ENCODE measurements at regions of chr10 and their contacts with region 1.

Region 1: GRCh38 chr10:110918643-110919363 is at the start of gene BBIP1:
- DNase-seq: no peak
- H3K4me3 Mint-ChIP-seq: peak within 1 kb of the TSS; percentile 94
- H3K27ac Mint-ChIP-seq: peak within 1 kb of the TSS; percentile 93
- H3K4me1 Mint-ChIP-seq: peaks cover 39% of the 10 kb centered on the region
- H3K27me3 Mint-ChIP-seq: no peaks in the 10 kb centered on the region
- total RNA-seq, gene BBIP1: 31.5 and 32.7 TPM in 2 replicates

Region 2: DNA sequence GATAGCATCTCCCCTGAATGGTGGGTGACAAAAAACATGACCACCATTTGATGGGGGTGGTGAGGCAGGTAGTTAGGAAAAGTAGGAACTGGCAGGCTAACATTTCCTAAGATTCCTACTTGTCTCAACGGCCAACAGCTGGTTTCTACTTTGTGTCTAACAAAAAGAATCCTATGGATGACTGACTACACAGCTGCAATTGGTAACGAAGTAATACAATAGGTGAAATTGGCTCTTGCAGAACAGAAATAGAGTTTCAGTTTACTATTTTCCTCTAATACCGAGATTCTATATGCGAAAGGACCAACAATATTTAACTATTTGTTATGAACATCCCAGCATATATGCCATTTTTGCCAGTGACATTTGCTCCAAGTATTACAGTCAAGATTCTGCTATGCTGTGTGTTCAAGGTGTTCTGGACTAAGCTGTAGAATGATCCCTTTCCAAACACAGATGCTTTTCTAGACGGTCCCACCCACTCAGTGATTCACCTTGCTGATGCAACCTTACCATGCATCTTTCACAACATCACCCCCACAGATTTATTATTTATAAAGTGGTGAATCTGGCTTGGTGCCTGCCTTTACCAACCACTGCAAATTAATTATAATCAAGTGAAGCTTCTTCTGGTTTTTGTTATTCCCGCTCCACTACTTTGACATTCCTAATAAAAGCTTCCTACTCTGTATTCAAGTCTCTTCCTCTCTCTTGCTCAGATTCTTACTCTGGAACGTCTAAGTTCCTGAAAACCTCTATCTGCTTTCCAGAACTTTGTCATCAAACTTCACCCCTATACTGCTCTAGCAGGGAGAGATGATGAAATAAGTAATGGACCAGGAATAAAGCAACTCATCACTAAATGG is 16.6 kb before region 1 on chr10:
- intact Hi-C with region 1: loop called (anchors 2 kb)
- DNase-seq: no peak
- H3K4me3 Mint-ChIP-seq: no peak overlapping the region
- H3K27ac Mint-ChIP-seq: no peak overlapping the region
- H3K4me1 Mint-ChIP-seq: peaks cover 20% of the 10 kb centered on the region
- H3K27me3 Mint-ChIP-seq: no peaks in the 10 kb centered on the region

Measured in activated T-helper 2 cell treated with anti-CD3 and anti-CD28 coated beads, Interferon-gamma antibody, Interleukin-2, Interleukin-4, amounts not matched to agents 10 μg/mL and 5 μg/mL and 100 μg/mL, durations not matched to agents 14 hours and 24 hours and 36 hours (primary cell).